ENCODE measurements at regions of chr9 and their contacts with region 1.

Region 1: DNA sequence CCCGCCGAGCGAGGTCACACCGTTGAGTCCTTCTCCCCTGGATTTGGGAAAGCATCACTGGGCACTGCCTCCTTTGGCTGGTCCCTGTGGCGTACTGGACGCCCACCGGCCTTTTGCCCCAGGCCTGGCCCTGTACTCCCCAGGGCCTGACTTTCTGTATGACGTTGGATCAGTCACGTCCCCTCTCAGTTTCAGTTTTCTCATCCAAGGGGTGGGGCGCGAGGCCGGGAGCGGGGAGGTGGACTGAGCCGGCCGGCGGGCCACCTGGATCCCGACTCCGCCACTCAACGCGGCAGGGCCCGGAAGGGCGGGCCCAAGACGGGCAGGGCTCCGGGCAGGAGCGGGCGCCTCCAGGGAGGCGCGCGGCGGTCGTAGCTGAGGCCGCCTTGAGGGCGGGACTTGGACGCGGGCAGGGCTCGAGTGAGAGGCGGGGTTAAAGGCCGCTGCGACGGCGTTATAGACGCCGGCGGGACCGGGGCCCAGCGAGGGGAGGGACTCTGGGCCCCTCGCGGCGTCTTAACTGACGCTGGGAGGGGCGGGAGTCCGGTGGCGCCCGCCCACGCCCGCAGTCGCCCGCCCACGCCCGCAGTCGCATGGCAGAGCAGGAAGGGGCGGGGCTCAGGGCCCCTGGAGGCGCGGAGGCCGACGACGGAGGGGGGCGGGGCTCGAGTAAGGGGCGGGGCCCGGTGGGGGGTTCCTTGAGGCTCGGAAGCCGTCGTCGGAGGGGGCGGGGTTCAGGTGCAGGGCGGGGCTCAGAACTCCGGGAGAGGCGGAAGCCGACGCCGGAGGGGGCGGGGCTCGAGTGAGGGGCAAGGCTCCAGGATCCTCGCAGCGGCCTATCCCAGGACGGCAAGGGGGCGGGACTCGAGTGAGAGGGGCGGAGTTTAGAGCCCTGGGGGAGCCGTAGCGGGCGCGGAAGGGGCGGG is 549 bp upstream of the CARD19 start:
- DNase-seq: peak; percentile 99 to 100 (median 100)
- ATAC-seq: peak; percentile 88
- H3K4me3 ChIP-seq: peak overlapping the region; percentile 72
- H3K4me3 Mint-ChIP-seq: peak overlapping the region; percentile 83 to 95 (median 90)
- H3K27ac ChIP-seq: peak overlapping the region; percentile 93
- H3K27ac Mint-ChIP-seq: peak overlapping the region; percentile 93 to 99 (median 96)
- H3K4me1 ChIP-seq: peaks cover 41 to 58% of the 10 kb centered on the region in 2 donors
- H3K4me1 Mint-ChIP-seq: peaks cover 49 to 81% (median 71%) of the 10 kb centered on the region in 7 donors
- H3K27me3 ChIP-seq: no peaks in the 10 kb centered on the region
- H3K27me3 Mint-ChIP-seq: no peaks in the 10 kb centered on the region

Region 2: DNA sequence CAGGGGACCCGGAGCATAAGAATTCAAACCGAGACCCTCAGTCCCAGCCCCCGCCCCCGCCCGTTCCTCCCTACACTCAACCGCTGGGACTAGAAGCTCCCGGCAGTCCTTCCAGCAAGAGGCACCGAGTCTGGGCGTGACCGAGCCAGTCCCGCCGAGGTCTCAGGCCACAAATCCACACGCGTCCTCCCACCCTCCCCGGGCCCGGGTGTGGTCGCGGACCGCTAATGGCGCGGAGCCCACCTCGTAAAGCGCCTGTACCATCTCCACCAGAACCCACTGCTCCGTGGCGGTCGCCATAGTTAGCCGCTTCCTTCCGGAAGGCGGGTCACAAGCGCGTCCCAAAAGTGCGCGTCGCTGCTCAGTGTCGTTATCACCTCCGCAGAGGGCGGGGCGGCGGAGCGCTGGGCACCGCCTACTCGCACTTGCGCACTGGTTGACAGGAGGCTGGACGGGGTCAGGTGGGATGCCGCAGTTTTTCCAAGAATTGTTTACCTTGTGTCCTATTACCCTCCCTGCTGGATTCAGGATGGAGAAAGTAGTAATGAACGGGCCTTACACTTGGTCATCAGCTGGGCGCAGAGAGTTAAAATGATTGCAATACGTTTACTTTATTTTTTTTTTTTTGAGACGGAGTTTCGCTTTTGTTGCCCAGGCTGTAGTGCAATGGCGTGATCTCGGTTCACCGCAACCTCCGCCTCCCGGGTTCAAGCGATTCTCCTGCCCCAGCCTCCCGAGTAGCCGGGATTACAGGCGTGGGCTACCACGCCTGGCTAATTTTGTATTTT is 980.2 kb before region 1 on chr9 and contains the start of gene SPTLC1:
- CTCF ChIA-PET with region 1: no interaction called
- POLR2A ChIA-PET with region 1: no interaction called
- intact Hi-C with region 1: loop called in 1 of 2 experiments (anchors 5 kb)
- DNase-seq: peak; percentile 89 to 97 (median 94)
- ATAC-seq: peak; percentile 99
- H3K4me3 ChIP-seq: peak within 1 kb of the TSS; percentile 85
- H3K4me3 Mint-ChIP-seq: peak within 1 kb of the TSS; percentile 91 to 99 (median 97)
- H3K27ac ChIP-seq: peak within 1 kb of the TSS; percentile 96
- H3K27ac Mint-ChIP-seq: peak within 1 kb of the TSS; percentile 96 to 100 (median 98)
- H3K4me1 ChIP-seq: peaks cover 17 to 20% of the 10 kb centered on the region in 2 donors
- H3K4me1 Mint-ChIP-seq: peaks cover 17 to 51% (median 42%) of the 10 kb centered on the region in 7 donors
- H3K27me3 ChIP-seq: no peaks in the 10 kb centered on the region
- H3K27me3 Mint-ChIP-seq: peaks cover 0 to 2% (median 0%) of the 10 kb centered on the region in 5 donors
- total RNA-seq, gene SPTLC1: 45.6 to 64.0 (median 51.0) TPM

Region 3: DNA sequence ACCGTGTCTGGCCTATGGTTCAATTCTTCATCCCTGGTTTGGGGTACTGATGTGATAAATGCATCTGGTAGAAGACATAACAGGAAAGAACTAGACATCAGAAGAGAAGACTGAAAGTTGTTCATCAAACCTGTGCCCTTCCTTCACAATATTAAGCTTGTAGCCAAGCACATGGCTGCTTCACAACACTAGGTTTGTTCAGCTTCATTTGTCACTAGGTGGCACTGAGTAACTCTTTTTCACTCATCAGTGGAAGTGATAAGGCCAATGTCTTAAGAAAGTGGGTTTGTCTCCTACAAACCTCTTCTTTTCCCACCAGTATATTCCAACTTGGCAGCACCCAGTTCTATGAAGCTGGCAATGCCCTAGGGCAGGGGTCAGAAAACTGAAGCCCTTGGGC is 244.6 kb before region 1 on chr9:
- CTCF ChIA-PET with region 1: no interaction called
- POLR2A ChIA-PET with region 1: no interaction called
- intact Hi-C with region 1: loop called in 1 of 2 experiments (anchors 5 kb)
- DNase-seq: peak in 7 of 9 donors; percentile 22 to 46 (median 27)
- ATAC-seq: no peak
- H3K4me3 ChIP-seq: no peak overlapping the region
- H3K4me3 Mint-ChIP-seq: no peak overlapping the region
- H3K27ac ChIP-seq: no peak overlapping the region
- H3K27ac Mint-ChIP-seq: peak overlapping the region in 3 of 9 donors; percentile 8 to 84 (median 42)
- H3K4me1 ChIP-seq: peaks cover 0 to 4% of the 10 kb centered on the region in 2 donors
- H3K4me1 Mint-ChIP-seq: peaks cover 0 to 17% (median 6%) of the 10 kb centered on the region in 7 donors
- H3K27me3 ChIP-seq: no peaks in the 10 kb centered on the region
- H3K27me3 Mint-ChIP-seq: no peaks in the 10 kb centered on the region

Region 4: DNA sequence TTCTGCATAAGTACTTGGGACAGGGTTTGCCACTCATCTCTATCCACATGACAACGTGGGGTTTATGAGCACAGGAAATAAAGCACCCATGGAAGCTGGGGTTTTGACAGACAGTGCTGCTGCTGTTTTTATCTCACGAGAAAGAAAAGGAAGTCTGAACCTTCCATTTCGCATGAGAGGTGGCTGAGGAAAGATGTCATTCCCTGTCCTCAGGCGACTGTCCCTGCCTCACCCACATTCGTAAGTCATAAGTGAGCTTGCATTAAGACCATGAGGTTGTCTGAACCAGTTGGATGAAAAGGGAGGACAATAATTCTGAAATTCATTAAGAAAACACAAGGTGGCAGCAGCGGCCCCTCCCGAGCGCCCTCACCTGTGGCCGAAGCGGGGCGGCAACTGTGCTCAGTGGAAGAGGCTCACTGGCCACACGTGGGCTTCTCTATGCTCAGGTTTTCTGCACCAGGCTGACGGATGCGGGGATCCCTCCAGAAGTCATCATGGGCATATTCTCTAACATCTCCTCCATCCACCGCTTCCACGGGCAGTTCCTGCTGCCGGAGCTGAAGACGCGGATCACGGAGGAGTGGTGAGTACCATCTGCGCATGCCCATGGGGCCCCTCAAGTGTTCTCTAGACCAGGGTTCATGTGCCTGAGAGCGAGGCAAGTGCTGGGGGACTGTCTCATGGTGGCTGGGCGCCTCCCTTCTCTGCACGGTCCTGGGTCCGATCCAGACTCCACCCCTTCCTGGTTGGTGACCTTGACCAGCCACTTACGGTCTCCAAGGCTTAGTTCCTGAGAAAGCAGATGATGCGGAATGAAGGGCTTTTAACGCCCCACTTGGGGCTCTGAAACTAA is 91.7 kb before region 1 on chr9:
- CTCF ChIA-PET with region 1: interaction called, 3 read pairs
- POLR2A ChIA-PET with region 1: interaction called, 3 read pairs
- intact Hi-C with region 1: loop called in 1 of 2 experiments (anchors 1 kb)
- DNase-seq: peak in 8 of 9 donors; percentile 55 to 77 (median 70)
- ATAC-seq: peak; percentile 88
- H3K4me3 ChIP-seq: peak overlapping the region; percentile 21
- H3K4me3 Mint-ChIP-seq: peak overlapping the region in 9 of 10 donors; percentile 54 to 72 (median 69)
- H3K27ac ChIP-seq: peak overlapping the region; percentile 56
- H3K27ac Mint-ChIP-seq: peak overlapping the region; percentile 81 to 98 (median 91)
- H3K4me1 ChIP-seq: peaks cover 47 to 60% of the 10 kb centered on the region in 2 donors
- H3K4me1 Mint-ChIP-seq: peaks cover 38 to 76% (median 67%) of the 10 kb centered on the region in 7 donors
- H3K27me3 ChIP-seq: no peaks in the 10 kb centered on the region
- H3K27me3 Mint-ChIP-seq: no peaks in the 10 kb centered on the region

Region 5: DNA sequence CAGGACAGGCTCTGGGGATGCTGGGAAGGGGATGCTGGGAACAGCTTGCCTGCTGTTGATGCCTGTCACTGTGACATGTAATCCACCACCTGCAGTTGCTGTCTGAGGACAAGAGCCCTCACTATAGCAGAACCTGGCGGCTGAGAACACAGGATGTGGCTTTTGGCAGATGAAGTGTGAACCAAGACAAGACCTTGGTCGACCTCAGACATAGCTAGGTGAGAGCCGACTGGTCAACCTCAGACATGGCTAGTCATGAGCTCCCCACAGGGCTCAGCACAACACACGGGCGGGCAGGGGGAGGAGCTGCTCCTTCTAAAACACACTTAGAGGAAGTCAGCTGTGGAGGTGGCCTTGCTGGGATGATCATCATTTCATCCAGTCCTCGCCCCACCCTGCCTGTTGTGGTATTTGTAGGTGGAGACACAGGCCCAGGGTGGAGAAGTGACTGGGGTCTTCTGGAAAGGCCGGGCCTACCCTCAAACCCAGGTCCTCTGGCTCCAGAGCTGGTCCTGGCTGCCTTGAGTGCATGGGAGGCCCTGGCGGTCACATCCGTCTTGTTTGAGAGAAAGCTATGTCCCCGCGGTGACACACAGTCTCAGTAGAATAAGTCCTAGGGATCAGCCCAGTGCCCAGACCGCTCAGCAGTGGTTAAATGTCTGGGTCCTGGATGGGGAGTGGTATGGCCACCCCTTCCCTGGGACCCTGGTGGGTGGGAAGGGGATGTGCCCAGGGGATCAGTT is 30.9 kb before region 1 on chr9:
- CTCF ChIA-PET with region 1: interaction called, 3 read pairs
- POLR2A ChIA-PET with region 1: interaction called, 60 read pairs
- intact Hi-C with region 1: loop called (anchors 1 kb)
- DNase-seq: peak; percentile 54 to 95 (median 90)
- ATAC-seq: peak; percentile 96
- H3K4me3 ChIP-seq: peak overlapping the region; percentile 90
- H3K4me3 Mint-ChIP-seq: peak overlapping the region; percentile 87 to 97 (median 92)
- H3K27ac ChIP-seq: peak overlapping the region; percentile 88
- H3K27ac Mint-ChIP-seq: peak overlapping the region; percentile 97 to 100 (median 99)
- H3K4me1 ChIP-seq: peaks cover 63 to 87% of the 10 kb centered on the region in 2 donors
- H3K4me1 Mint-ChIP-seq: peaks cover 71 to 95% (median 86%) of the 10 kb centered on the region in 7 donors
- H3K27me3 ChIP-seq: no peaks in the 10 kb centered on the region
- H3K27me3 Mint-ChIP-seq: no peaks in the 10 kb centered on the region

Region 6: GRCh38 chr9:93134015-93134739 is 38.7 kb after region 1 on chr9 and contains the start of gene NINJ1:
- CTCF ChIA-PET with region 1: no interaction called
- POLR2A ChIA-PET with region 1: interaction called, 4 read pairs
- intact Hi-C with region 1: loop called (anchors 1 kb)
- DNase-seq: peak; percentile 72 to 93 (median 83)
- ATAC-seq: peak; percentile 87
- H3K4me3 ChIP-seq: peak within 1 kb of the TSS; percentile 68
- H3K4me3 Mint-ChIP-seq: peak within 1 kb of the TSS; percentile 87 to 92 (median 90)
- H3K27ac ChIP-seq: peak within 1 kb of the TSS; percentile 99
- H3K27ac Mint-ChIP-seq: peak within 1 kb of the TSS; percentile 84 to 98 (median 98)
- H3K4me1 ChIP-seq: peaks cover 27 to 55% of the 10 kb centered on the region in 2 donors
- H3K4me1 Mint-ChIP-seq: peaks cover 40 to 80% (median 63%) of the 10 kb centered on the region in 7 donors
- H3K27me3 ChIP-seq: no peaks in the 10 kb centered on the region
- H3K27me3 Mint-ChIP-seq: no peaks in the 10 kb centered on the region
- total RNA-seq, gene NINJ1: 30.7 to 163 (median 64.7) TPM

Measured in naive thymus-derived CD4-positive, alpha-beta T cell (primary cell).